Activated T-helper 1 cell treated with anti-CD3 and anti-CD28 coated beads, Interleukin-12 subunit alpha, Interleukin-12 subunit beta, Interleukin-2, Interleukin-4 antibody, amounts not matched to agents 30 ng/mL and 10 ng/mL and 1 ng/mL, durations not matched to agents 14 hours and 24 hours and 36 hours (primary cell): ENCODE measurements at regions of chr6 and their contacts with region 1.

Region 1: DNA sequence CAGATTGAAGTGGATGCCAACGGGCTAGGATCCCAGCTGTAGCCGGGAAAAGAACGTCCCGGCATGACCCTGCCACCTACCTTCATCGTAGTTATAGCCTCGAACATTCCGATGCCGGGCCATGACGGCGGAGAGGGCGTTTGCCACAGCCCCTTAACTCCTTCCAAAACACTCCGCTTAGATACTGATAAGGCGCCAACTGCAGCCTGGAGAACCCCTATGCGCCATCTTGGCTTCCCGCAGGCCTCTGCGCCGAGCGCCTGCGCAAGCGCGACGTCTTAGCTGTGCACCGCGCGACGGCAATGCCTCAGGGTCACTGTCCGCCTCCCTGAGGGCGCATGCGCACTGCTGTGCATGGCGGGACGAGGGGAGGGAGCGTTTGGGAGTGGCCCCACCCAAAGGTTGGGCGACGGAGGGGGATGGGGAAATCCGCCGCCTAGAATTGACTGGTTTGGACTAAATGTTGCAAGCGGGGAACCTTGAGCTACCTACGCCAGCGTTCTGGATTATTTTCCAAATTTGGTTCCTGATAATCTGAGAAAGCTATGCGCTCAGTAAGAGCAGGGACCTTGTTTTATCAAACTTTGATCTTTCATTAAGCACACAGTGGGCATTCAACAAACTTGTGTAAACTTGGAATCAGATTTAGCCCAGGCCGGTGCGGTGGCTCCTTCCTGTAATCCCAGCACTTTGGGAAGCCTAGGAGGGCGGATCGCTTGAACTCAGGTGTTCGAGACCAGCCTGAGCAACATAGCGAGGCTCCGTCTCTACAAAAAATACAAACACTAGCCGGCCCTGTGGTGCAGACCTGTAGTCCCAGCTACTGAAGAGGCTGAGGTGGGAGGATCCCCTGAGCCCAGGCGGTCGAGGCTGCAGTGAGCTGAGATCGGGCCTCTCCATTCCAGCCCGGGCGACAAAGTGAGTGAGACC is at the start of gene HBS1L:
- DNase-seq: peak; percentile 99
- H3K4me3 Mint-ChIP-seq: peak within 1 kb of the TSS; percentile 94
- H3K27ac Mint-ChIP-seq: peak within 1 kb of the TSS; percentile 96
- H3K4me1 Mint-ChIP-seq: peaks cover 42% of the 10 kb centered on the region
- H3K27me3 Mint-ChIP-seq: peaks cover 2% of the 10 kb centered on the region
- total RNA-seq, gene HBS1L: 104 and 115 TPM in 2 replicates

Region 2: GRCh38 chr6:134938896-134939295 is 115.9 kb before region 1 on chr6:
- intact Hi-C with region 1: no loop called
- DNase-seq: peak; percentile 41
- H3K4me3 Mint-ChIP-seq: no peak overlapping the region
- H3K27ac Mint-ChIP-seq: peak overlapping the region; percentile 5
- H3K4me1 Mint-ChIP-seq: peaks cover 39% of the 10 kb centered on the region
- H3K27me3 Mint-ChIP-seq: no peaks in the 10 kb centered on the region

Region 3: GRCh38 chr6:135014353-135014832 is 40.4 kb before region 1 on chr6:
- intact Hi-C with region 1: loop called (anchors 2 kb)
- DNase-seq: no peak
- H3K4me3 Mint-ChIP-seq: peak overlapping the region; percentile 54
- H3K27ac Mint-ChIP-seq: peak overlapping the region; percentile 92
- H3K4me1 Mint-ChIP-seq: peaks cover 57% of the 10 kb centered on the region
- H3K27me3 Mint-ChIP-seq: no peaks in the 10 kb centered on the region

Region 4: DNA sequence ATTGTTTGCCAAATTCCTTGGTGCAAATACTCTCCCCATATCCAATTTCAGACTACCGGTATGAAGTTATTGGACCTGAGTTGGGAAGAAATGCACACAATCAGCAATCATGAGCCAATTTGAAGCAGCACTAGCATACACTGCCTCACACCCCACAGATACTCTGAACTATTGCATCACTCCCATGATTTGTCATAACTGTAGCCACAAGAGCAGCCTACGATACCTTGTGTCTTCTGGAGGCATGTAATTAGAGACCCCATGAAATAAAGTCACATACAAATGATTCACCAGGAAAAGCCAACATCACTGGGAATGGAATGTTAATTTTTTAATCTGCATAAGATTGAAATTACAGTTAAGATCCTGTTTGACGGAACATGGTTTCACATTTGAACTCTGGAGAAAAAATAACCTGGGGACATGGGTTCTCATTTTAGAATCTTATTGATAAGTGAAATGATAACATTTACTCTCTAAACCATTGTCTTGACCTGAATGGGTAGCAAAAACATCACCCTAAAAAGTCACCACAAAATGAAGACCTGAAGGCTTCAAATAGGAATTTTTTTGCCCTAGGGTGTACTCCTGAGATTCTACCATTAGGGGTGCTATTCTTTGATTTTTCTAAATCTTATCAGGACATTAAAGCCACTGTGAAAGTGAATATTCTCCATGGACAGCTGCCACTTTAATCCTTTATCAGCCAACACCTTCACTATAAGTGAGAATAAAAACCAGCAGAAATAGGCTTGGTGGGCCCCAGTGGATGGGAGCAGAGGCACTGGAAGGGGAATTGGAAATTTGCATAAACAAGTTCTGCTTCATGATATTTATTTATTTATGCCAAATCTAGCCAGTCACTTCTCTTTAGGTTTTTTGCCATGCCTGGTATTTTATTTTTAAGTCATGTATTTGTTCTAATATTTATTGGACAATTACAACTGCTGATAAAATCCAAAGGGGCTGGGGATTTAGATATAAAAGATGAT is 34.3 kb after region 1 on chr6:
- intact Hi-C with region 1: loop called (anchors 1 kb)
- DNase-seq: peak; percentile 58
- H3K4me3 Mint-ChIP-seq: peak overlapping the region; percentile 57
- H3K27ac Mint-ChIP-seq: peak overlapping the region; percentile 93
- H3K4me1 Mint-ChIP-seq: peaks cover 89% of the 10 kb centered on the region
- H3K27me3 Mint-ChIP-seq: no peaks in the 10 kb centered on the region

Region 5: GRCh38 chr6:135128268-135128914 is 73.6 kb after region 1 on chr6:
- intact Hi-C with region 1: loop called (anchors 1 kb)
- DNase-seq: peak; percentile 53
- H3K4me3 Mint-ChIP-seq: peak overlapping the region; percentile 66
- H3K27ac Mint-ChIP-seq: peak overlapping the region; percentile 97
- H3K4me1 Mint-ChIP-seq: peaks cover 63% of the 10 kb centered on the region
- H3K27me3 Mint-ChIP-seq: no peaks in the 10 kb centered on the region

Region 6: DNA sequence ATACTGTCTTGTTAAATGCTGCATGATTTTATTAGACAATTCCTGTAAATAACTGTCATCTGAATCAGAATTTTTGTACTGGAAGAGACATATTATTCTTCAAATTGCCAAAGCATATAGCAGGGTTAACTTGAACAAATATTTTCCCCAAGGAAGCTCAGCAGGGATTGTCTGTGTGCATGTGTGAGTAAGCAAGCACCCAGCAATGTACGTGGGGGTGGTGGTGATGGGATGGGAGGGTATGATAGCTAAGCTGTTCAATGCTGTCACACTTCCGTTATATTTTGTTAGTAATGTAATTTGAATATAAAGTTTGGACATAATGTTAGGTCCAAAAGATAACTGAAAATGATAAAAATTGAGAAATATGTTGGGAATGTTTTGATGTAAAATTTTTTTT is 244.4 kb after region 1 on chr6:
- intact Hi-C with region 1: loop called (anchors 1 kb)
- DNase-seq: no peak
- H3K4me3 Mint-ChIP-seq: no peak overlapping the region
- H3K27ac Mint-ChIP-seq: no peak overlapping the region
- H3K4me1 Mint-ChIP-seq: peaks cover 14% of the 10 kb centered on the region
- H3K27me3 Mint-ChIP-seq: no peaks in the 10 kb centered on the region

Region 7: DNA sequence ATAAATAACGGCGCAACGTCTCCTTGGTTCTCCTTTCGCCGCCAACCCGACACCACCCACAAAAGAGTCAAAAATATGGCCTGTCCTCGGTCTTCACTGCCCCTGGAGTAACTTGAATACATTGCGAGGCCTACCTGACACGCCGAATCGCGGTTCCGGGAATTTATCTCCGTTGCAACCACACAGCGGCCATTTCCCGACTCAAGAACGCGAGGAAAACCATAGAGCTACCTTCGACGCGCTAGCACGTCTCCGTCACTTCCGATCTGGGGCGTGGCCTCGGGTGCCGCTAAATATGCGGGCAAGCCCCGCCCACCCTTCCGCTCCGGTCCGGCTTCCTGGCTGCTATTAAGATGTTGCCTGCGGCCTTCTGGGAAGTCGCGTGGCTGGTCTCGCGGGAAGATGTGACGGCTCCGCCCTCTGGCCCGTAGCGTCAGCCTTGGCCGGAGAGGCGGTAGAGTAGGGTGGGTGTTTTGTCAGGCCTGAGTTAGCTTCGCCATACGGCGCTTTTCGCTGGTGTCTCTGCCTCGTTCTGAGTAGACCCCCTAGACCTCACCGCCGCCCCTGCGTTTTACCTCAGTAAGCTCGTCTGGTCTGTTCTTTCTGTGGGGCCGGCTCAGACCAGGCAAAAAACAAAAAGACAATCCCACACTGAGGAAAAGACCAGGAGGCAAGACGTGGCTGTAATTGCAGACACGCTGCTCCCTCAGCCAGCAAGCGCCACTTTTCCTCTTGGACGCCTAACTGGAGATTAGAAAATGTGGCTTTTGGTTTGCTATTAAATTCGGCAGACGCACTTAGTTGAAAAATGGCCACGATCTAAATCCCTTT is 1235.0 kb after region 1 on chr6 and contains the start of gene BCLAF1:
- intact Hi-C with region 1: loop called (anchors 1 kb)
- DNase-seq: peak; percentile 100
- H3K4me3 Mint-ChIP-seq: peak within 1 kb of the TSS; percentile 98
- H3K27ac Mint-ChIP-seq: peak within 1 kb of the TSS; percentile 99
- H3K4me1 Mint-ChIP-seq: peaks cover 48% of the 10 kb centered on the region
- H3K27me3 Mint-ChIP-seq: peaks cover 2% of the 10 kb centered on the region
- total RNA-seq, gene BCLAF1: 233 and 237 TPM in 2 replicates